Sigmoid colon (tissue), 7 donors: ENCODE measurements at regions of chr5 and their contacts with region 1.

Region 1: DNA sequence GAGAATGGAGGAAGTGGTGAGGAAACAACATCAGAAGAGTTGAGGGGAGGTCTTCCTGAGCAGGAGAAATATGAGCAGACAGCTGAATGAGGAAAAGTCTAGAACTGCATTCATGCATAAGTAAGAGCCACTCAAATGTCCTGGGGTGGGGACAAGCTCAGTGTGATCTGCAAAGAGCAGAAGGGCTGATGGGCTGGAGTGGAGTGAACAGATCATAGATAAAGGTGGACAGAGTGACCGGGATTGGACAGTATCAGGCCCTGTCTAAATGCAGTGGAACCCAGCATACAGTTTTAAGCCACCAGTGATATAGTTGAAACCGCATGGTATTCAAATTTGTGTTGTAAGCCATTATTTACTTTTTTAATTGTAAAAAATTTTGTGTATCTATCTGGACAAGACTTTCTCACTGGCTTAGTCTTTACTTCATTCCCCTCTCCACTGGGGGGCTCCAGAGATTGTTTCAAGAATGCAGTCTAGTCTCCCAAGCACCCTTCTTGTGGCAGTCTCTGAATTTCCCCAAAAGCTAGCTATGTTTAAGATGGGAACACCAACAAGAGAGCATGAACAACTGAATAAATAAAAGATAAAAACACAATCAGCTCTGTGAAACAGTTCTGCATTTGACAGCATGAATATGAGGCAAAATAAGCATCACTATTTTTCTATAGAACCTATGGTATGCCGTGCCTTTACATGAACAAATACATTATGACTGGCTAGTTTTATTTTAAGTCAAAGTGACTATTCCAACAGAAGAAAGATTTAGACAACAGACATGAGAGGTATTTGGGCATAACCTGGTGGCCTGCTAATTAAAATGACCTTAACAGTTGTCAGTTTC is 10.7 kb upstream of the STK32A start:
- DNase-seq: peak; percentile 66
- H3K4me3 ChIP-seq: no peak overlapping the region
- H3K27ac ChIP-seq: no peak overlapping the region
- H3K4me1 ChIP-seq: no peaks in the 10 kb centered on the region
- H3K27me3 ChIP-seq: no peaks in the 10 kb centered on the region
- CTCF ChIP-seq: peak; percentile 31 to 68 (median 56)
- EP300 ChIP-seq: no peak
- POLR2A ChIP-seq: no peak

Region 2: GRCh38 chr5:147384346-147385193 is 160.4 kb after region 1 on chr5:
- intact Hi-C with region 1: loop called (anchors 5 kb)
- DNase-seq: no peak
- H3K4me3 ChIP-seq: no peak overlapping the region
- H3K27ac ChIP-seq: peak overlapping the region in 2 of 4 donors; percentile 15 to 45
- H3K4me1 ChIP-seq: peaks cover 0 to 24% (median 10%) of the 10 kb centered on the region in 4 donors
- H3K27me3 ChIP-seq: no peaks in the 10 kb centered on the region
- CTCF ChIP-seq: no peak
- EP300 ChIP-seq: no peak
- POLR2A ChIP-seq: no peak

Region 3: GRCh38 chr5:147397616-147398015 is 173.4 kb after region 1 on chr5:
- intact Hi-C with region 1: no loop called
- DNase-seq: no peak
- H3K4me3 ChIP-seq: no peak overlapping the region
- H3K27ac ChIP-seq: no peak overlapping the region
- H3K4me1 ChIP-seq: peaks cover 0 to 15% (median 1%) of the 10 kb centered on the region in 4 donors
- H3K27me3 ChIP-seq: no peaks in the 10 kb centered on the region
- CTCF ChIP-seq: no peak
- EP300 ChIP-seq: no peak
- POLR2A ChIP-seq: no peak

Region 4: DNA sequence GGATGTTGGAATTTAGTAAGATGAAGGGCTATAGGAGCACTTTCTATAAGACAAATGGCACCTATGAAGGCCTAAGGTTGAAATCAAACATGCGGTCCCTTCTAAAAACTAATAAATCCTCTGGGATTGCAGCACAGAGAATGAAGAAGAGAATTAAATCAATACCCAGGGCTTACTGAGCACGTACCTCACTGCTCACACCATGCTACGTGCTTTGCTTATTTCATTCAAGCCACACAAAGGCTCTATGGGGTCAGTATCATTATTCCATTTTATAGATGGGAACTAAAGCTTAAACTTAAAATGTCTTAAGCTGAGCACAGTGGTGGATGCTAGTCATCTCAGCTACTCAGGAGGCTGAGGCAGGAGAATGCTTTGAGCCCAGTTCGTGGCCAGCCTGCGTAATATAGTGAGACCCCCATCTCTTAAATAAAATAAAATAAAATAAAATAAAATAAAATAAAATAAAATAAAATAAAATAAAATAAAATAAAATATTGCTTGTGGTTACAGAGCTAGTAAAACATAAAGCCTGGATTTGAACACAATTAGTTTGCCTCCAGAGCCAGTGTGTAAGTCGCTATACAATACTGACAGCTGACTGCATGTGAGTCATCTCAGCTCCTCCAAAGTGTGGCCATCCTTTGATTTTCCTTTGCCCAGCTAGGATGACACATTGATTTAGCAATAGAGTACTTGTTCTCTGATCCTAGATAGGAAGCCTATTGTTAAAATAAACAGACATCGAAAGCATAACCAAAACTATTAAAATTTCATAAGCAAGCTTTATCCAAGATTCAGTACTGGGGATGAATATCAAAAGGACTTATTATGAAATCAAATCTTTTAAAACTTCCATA is 306.6 kb after region 1 on chr5:
- intact Hi-C with region 1: no loop called
- DNase-seq: no peak
- H3K4me3 ChIP-seq: no peak overlapping the region
- H3K27ac ChIP-seq: peak overlapping the region in 3 of 4 donors; percentile 45 to 70 (median 68)
- H3K4me1 ChIP-seq: peaks cover 0 to 29% (median 26%) of the 10 kb centered on the region in 4 donors
- H3K27me3 ChIP-seq: no peaks in the 10 kb centered on the region
- CTCF ChIP-seq: no peak
- EP300 ChIP-seq: no peak
- POLR2A ChIP-seq: no peak

Region 5: DNA sequence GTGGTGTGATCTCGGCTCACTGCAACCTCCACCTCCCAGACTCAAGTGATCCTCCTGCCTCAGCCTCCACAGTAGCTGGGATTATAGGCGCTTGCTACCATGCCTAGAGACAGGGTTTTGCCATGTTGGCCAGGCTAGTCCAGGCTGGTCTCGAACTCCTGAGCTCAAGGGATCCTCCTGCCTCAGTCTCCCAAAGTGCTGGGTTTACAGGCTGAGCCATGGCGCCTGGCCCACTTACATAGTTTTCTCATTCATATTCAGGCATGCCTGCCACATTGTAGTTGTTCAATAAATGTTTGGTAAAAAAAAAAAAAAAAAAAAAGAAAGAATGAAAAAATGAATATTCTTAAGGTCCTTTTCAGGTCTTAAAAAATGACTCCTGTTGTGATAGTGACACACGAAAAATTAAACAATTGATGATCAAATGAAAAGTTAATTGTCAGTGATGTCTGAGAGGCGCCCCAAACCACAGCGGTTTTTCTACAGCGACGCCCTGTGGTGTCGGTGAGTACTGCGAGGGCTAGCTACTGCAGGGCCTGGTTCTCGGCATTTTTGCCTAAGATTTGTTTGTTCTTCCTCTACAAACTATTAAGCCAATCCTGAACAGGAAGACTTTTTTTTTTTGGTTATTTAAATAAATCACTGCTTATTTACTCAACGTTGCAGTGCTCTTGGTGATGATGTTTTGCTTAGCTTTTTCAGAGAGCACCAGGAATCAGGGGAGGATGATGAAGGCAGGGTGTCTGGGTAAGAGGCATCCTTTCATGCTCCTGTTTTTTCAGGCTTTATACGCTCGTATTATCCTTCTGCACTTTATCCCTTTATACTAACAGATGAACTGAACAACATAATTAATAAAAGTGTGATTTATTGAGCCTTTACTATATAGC is 352.7 kb after region 1 on chr5:
- intact Hi-C with region 1: loop called (anchors 1 kb)
- DNase-seq: peak; percentile 72
- H3K4me3 ChIP-seq: no peak overlapping the region
- H3K27ac ChIP-seq: no peak overlapping the region
- H3K4me1 ChIP-seq: peaks cover 0 to 14% (median 4%) of the 10 kb centered on the region in 4 donors
- H3K27me3 ChIP-seq: no peaks in the 10 kb centered on the region
- CTCF ChIP-seq: peak; percentile 67 to 87 (median 78)
- EP300 ChIP-seq: no peak
- POLR2A ChIP-seq: no peak